Left colon (tissue), 2 donors: ENCODE measurements at regions of chr2 and their contacts with region 1.

Region 1: DNA sequence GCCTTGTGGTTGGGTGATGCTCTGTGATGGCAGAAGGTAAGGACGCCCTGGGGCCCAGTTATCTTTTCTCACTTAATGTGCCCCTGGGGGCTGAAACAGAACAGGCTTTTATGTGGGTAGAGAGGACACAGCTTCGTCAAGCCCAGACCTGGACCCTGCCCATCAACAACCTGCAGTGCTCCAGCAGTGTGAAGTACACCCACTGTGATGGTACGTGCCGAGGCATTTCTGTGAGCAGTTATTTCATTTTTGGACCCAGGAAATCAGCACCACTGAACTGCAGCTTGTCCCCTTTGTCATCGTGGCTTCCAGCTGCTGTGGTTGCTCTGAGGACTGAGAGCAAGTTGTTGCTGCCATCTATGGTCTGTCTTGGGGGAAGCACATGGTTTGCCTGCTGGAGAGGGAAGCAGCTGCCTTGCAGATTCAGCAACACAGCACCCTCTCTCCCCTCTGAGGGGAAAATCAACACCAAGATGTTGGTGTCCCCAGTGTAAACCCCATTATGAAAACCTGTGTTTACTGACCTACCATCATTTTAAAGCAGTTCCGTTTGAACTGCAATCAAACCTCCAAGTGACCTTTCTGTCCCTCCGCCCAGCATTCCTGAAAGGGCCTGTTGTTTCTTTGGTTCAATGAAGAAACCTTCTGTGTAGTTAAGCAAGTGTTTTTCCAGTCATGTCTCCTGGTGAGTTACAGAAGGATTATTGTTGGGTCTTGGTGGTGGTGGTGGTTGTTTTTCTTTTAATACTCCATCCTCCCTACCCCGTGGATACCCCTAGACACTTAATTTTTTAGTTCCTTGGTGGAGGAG is 158.2 kb downstream of the MGAT5 start:
- DNase-seq: peak; percentile 61 to 62
- ATAC-seq: peak; percentile 90

Region 2: GRCh38 chr2:134245340-134245984 is 166.6 kb before region 1 on chr2:
- intact Hi-C with region 1: loop called in 1 of 2 experiments (anchors 10 kb)
- DNase-seq: peak; percentile 73 to 93
- ATAC-seq: peak; percentile 69

Region 3: DNA sequence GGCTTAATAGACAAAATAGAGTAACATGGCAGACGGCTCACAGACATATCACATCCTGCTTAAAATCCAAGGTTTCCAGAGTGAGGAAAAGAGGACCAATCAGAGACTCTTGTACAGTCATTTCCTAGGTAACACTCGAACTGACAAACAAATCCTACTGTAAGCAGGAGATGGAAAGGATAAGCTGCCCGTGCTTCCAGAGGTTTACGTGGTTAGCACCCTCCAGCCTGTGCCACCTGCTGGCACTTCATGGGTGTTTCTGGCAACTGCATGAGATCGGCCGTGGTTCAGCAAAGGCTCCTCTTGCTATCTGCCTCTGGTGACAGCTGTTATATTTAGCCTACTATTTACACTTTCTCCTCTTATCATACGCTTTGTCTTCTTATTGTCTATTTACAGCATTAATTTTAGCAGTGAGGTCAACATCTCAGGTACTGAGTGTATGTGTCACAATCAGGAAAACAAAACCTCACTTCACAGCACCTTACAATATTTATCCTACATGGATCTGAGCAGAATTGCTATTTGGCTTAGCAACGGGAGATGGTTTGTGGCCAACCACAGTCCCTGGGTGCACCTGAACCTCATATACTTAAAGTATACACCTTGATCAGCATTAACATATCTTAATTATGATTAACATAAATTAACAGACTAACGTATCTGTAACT is 79.9 kb after region 1 on chr2:
- intact Hi-C with region 1: no loop called
- DNase-seq: peak in 1 of 2 donors; percentile 30
- ATAC-seq: peak; percentile 71